Activated naive CD8-positive, alpha-beta T cell treated with anti-CD3 and anti-CD28 coated beads, Interleukin-2, amount 10 ng/mL, durations not matched to agents 7 days and 5 days (primary cell): ENCODE measurements at regions of chr6 and their contacts with region 1.

Region 1: DNA sequence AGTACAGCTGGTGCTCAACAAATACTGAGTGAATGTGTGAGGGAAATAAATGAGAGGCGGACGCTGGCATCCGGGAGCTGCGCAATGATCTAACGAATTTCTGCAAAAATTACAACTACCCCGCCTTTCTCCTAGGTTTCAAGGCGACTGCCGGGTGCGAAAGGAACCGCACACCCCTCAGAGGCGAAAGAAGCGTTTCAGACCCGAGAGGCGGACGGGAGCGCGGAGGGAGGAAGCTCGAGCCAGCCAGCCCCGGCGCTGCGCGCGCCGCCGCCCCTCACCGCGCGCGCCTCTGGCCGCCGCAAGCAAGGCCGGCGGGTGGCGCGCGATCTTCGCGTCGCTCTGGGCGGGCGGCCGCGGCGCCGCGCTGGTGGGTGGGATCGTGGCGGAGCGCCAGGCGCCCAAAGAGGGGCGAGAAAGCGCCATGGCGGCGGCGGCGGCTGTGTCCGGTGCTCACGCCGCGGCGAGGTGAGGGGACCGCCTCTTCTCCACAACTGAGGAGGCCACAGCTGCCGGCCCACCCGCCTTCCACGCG is at the start of gene BLTP3A:
- DNase-seq: peak; percentile 87
- ATAC-seq: peak; percentile 94
- H3K4me3 Mint-ChIP-seq: peak within 1 kb of the TSS; percentile 87
- H3K27ac Mint-ChIP-seq: peak within 1 kb of the TSS; percentile 86
- H3K4me1 Mint-ChIP-seq: peaks cover 16% of the 10 kb centered on the region
- H3K27me3 Mint-ChIP-seq: no peaks in the 10 kb centered on the region
- total RNA-seq, gene BLTP3A: 11.7 to 11.8 TPM

Region 2: DNA sequence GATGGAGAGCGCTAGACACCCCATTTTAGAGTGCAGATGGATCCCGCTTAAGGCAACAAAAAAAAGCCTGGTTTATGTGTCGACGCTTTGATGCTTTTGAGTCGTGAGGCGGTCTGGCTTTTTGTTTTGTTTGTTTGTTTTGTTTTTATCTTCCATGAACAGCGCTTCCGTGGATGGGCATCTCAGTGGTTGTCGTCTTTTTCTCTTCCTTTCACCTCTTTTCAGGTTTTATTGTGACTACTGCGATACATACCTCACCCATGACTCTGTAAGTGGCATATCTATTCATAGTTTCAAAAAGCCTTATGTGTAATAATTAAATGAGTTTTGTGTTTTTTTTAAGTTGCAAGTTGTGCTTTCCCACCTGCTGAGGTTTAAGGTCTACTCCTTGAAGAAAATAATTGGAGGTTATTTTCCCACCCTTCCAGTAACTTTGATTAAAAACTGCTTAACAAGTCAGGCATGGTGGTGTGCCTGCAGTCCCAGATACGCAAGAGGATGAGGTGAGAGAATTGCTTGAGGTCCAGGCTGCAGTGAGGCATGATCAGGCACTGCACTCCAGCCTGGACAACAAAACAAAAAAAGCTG is 34.0 kb before region 1 on chr6:
- POLR2A ChIA-PET with region 1: interaction called, 36 read pairs
- DNase-seq: no peak
- ATAC-seq: no peak
- H3K4me3 Mint-ChIP-seq: no peak overlapping the region
- H3K27ac Mint-ChIP-seq: no peak overlapping the region
- H3K4me1 Mint-ChIP-seq: peaks cover 6% of the 10 kb centered on the region
- H3K27me3 Mint-ChIP-seq: no peaks in the 10 kb centered on the region

Region 3: DNA sequence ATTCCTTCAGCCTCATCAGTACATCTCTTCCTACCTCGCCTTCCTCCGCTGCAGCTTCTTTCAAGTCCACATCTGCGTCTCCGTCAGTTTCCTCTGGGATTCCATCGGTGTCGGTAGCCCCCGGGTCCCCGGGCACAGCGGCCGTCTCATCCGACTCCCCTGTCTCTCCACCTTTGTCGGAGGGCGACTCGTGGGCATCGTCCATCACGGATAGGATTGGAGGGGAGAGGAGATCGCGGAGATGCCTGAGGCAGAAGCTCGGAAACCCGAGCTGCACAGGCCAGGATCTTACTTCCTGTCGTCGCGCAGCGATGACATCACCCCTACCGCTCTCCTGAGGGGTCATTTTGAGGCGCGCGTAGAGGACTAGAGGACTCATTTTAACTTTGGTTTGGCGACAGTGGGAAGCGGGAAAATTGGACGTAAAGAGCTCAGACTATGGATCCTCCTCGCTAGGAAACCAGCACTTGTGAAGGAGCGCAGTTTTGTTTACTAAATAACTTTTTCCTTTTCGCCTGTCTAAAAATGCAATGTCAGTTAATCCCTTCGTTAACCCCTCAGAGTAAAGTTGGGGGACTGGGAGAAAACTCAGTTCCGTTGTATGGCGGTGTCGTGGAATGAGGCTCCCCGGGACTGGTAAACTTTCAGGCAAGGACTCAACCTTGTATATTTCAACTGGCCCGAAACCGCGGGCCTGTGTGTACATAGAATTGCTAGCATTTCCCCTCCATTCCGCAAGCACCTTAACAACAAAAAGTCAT is 96.2 kb after region 1 on chr6 and contains the start of gene TAF11:
- POLR2A ChIA-PET with region 1: interaction called, 24 read pairs
- DNase-seq: peak; percentile 89
- ATAC-seq: peak; percentile 90
- H3K4me3 Mint-ChIP-seq: peak within 1 kb of the TSS; percentile 99
- H3K27ac Mint-ChIP-seq: peak within 1 kb of the TSS; percentile 99
- H3K4me1 Mint-ChIP-seq: peaks cover 28% of the 10 kb centered on the region
- H3K27me3 Mint-ChIP-seq: peaks cover 7% of the 10 kb centered on the region
- total RNA-seq, gene TAF11: 30.5 to 31.0 TPM

Region 4: GRCh38 chr6:35128496-35128895 is 336.7 kb after region 1 on chr6:
- POLR2A ChIA-PET with region 1: no interaction called
- DNase-seq: no peak
- ATAC-seq: no peak
- H3K4me3 Mint-ChIP-seq: no peak overlapping the region
- H3K27ac Mint-ChIP-seq: no peak overlapping the region
- H3K4me1 Mint-ChIP-seq: no peaks in the 10 kb centered on the region
- H3K27me3 Mint-ChIP-seq: peaks cover 27% of the 10 kb centered on the region